T-cell (primary cell): ENCODE measurements at regions of chr17 and their contacts with region 1.

Region 1: GRCh38 chr17:1365445-1366039 is 34.5 kb downstream of the YWHAE start:
- DNase-seq: peak; percentile 12 to 86 (median 50)
- ATAC-seq: peak; percentile 63 to 75 (median 67)
- H3K4me3 ChIP-seq: no peak overlapping the region
- H3K4me3 Mint-ChIP-seq: no peak overlapping the region
- H3K27ac ChIP-seq: peak overlapping the region; percentile 57
- H3K27ac Mint-ChIP-seq: peak overlapping the region; percentile 49 to 73
- H3K4me1 ChIP-seq: peaks cover 24 to 41% of the 10 kb centered on the region in 2 experiments
- H3K4me1 Mint-ChIP-seq: peaks cover 70 to 76% (median 74%) of the 10 kb centered on the region in 3 donors
- H3K27me3 ChIP-seq: no peaks in the 10 kb centered on the region
- H3K27me3 Mint-ChIP-seq: no peaks in the 10 kb centered on the region

Region 2: GRCh38 chr17:1379930-1380313 is 14.4 kb after region 1 on chr17:
- CTCF ChIA-PET with region 1: interaction called in 1 of 2 experiments, 33 read pairs
- POLR2A ChIA-PET with region 1: interaction called, 3 to 6 read pairs
- DNase-seq: peak in 5 of 35 experiments; percentile 13 to 64 (median 16)
- ATAC-seq: peak in 1 of 4 experiments; percentile 54
- H3K4me3 ChIP-seq: no peak overlapping the region
- H3K4me3 Mint-ChIP-seq: peak overlapping the region; percentile 18 to 54 (median 39)
- H3K27ac ChIP-seq: no peak overlapping the region
- H3K27ac Mint-ChIP-seq: peak overlapping the region; percentile 5 to 65
- H3K4me1 ChIP-seq: peaks cover 40 to 90% of the 10 kb centered on the region in 2 experiments
- H3K4me1 Mint-ChIP-seq: peaks cover 78 to 87% (median 80%) of the 10 kb centered on the region in 3 donors
- H3K27me3 ChIP-seq: no peaks in the 10 kb centered on the region
- H3K27me3 Mint-ChIP-seq: no peaks in the 10 kb centered on the region

Region 3: DNA sequence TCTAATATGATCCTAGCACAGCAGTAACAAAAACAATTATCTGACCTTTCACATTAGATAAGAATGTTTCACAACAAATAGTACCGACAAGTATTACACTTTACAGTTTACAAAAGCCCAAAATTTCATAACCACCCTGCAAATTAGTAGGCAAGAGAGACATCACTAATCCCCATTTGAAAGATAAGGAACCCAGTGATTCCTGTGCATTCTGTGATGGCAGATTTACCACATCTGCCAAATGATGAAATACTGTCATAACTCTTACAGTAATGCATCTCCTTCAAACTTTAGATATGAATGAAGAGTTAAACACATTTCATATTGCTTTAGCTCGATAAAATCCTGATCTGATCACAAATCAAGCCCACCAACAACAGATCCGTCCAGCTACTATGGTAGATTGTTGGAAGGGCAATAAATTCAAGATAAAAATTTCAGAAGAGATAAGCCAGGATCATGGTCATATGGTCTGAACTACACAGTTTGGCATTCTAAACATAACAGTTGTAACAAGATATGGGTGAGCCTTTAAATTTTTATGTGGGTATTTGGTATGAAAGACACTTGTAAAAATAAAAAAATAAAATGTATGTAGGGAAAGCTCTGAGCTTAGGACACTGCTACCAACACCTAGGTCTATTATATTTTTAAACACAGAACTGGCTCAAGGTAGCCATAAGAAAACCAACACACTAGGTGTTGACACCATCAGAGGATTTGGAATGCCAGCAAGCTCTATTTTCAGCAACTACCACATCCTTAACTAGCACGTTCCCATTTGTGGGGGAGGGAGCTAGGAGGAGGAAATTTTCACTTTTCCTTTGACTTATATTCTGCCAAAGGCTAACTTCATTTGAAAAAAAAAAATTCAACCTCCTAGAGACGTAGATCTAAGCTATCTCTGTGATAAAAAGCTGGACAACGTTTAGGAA is 25.2 kb after region 1 on chr17:
- CTCF ChIA-PET with region 1: interaction called in 1 of 2 experiments, 15 read pairs
- POLR2A ChIA-PET with region 1: interaction called, 3 to 4 read pairs
- DNase-seq: no peak
- ATAC-seq: no peak
- H3K4me3 ChIP-seq: no peak overlapping the region
- H3K4me3 Mint-ChIP-seq: peak overlapping the region in 2 of 3 donors; percentile 2 to 41
- H3K27ac ChIP-seq: no peak overlapping the region
- H3K27ac Mint-ChIP-seq: peak overlapping the region; percentile 46 to 73
- H3K4me1 ChIP-seq: peaks cover 38 to 74% of the 10 kb centered on the region in 2 experiments
- H3K4me1 Mint-ChIP-seq: peaks cover 84 to 88% (median 88%) of the 10 kb centered on the region in 3 donors
- H3K27me3 ChIP-seq: no peaks in the 10 kb centered on the region
- H3K27me3 Mint-ChIP-seq: no peaks in the 10 kb centered on the region

Region 4: DNA sequence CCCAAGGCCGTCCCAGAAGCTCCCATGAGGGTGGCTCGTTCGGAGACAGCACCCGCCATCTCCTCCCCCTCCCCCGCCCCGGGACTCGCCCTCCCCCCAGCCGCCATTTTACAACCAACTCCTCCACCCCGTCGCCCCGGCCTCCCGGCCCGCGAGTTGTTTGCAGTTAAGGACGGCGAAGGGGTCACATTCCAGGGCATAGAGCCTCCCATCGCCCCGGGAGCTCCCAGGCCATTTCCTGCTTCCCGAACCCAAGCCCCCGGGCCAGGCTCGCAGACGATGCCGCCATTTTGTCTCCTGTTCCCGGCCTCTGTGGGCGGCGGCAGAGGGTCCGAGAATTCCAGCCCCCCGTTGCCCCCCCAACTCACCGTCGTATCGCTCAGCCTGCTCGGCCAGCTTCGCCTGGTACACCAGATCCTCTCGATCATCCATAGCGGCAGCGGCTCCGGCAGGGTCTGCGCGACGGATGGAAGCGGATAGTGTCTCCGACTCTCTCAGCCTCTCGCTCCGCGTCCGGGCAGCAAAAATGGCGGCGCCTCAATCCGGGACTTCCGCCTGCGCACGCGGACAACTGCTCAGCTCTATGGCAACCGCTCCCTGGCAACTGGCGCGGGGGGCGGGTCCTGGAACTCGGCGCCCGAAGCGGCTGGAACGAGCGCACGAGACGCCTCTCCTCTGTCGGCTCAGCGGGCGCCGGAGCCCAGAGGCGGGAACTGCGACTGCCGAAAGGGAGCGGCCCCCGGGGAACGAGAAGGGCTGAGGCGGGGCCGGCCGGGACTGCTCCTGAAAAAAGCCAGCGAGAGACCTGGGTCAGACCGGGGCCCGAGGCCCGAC is 34.4 kb after region 1 on chr17 and contains the start of gene YWHAE:
- CTCF ChIA-PET with region 1: interaction called in 1 of 2 experiments, 13 read pairs
- POLR2A ChIA-PET with region 1: interaction called, 3 to 6 read pairs
- DNase-seq: peak; percentile 91 to 98 (median 94)
- ATAC-seq: peak; percentile 86 to 91 (median 90)
- H3K4me3 ChIP-seq: peak within 1 kb of the TSS; percentile 92 to 95
- H3K4me3 Mint-ChIP-seq: peak within 1 kb of the TSS; percentile 97 to 99 (median 98)
- H3K27ac ChIP-seq: peak within 1 kb of the TSS; percentile 84
- H3K27ac Mint-ChIP-seq: peak within 1 kb of the TSS; percentile 97 to 98
- H3K4me1 ChIP-seq: peaks cover 18 to 37% of the 10 kb centered on the region in 2 experiments
- H3K4me1 Mint-ChIP-seq: peaks cover 34 to 43% (median 40%) of the 10 kb centered on the region in 3 donors
- H3K27me3 ChIP-seq: no peaks in the 10 kb centered on the region
- H3K27me3 Mint-ChIP-seq: no peaks in the 10 kb centered on the region
- total RNA-seq, gene YWHAE: 119 to 129 (median 126) TPM

Region 5: GRCh38 chr17:1455797-1456599 is 90.5 kb after region 1 on chr17 and contains the start of gene CRK:
- CTCF ChIA-PET with region 1: interaction called, 3 to 4 read pairs
- POLR2A ChIA-PET with region 1: interaction called, 3 to 10 read pairs
- DNase-seq: peak; percentile 93 to 100 (median 97)
- ATAC-seq: peak; percentile 92 to 98 (median 96)
- H3K4me3 ChIP-seq: peak within 1 kb of the TSS; percentile 80 to 86
- H3K4me3 Mint-ChIP-seq: peak within 1 kb of the TSS; percentile 86 to 89 (median 87)
- H3K27ac ChIP-seq: peak within 1 kb of the TSS; percentile 78
- H3K27ac Mint-ChIP-seq: peak within 1 kb of the TSS; percentile 79 to 94
- H3K4me1 ChIP-seq: peaks cover 6 to 54% of the 10 kb centered on the region in 2 experiments
- H3K4me1 Mint-ChIP-seq: peaks cover 49 to 51% (median 51%) of the 10 kb centered on the region in 3 donors
- H3K27me3 ChIP-seq: peaks cover 0 to 16% of the 10 kb centered on the region in 2 experiments
- H3K27me3 Mint-ChIP-seq: no peaks in the 10 kb centered on the region
- total RNA-seq, gene CRK: 18.0 to 26.8 (median 22.6) TPM

Region 6: DNA sequence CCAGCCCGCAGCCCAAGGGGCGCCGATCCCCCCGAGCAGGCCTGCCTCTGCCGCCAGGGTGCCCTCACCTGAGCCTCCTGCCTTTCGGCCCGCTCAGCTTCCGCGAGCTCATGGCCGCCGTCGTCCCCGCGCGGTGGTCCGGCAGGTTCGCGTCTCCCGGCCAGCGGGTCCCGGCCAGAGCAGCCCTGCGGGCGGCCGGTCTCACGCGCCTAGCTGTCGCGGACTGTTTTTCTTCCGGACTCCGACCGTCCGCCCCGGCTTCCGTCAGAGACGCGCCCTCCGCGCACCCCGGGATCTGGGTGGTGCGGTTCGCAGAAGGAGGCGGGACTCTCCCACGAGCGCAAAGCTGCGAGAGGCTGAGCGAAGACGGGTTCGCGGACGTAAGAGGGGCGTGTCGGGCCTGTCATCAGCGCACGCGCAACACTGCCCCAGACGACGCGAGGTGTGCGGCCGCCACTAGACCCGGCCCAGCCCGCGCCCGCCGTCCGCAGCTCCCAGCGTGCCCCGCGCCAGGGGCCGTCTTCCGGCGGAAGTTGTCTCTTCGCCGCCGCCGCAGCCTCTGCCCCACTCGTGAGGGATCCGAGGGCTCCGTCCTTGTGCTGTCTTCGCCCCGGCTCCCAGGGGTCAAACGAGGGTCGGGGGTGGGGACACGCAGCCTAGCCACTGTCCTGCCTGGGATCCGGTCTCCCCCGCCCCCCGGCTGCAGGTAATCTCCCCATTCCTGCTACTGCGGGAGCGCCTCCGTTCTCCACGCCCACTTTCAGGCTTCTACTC is 151.0 kb after region 1 on chr17 and contains the start of gene INPP5K:
- CTCF ChIA-PET with region 1: interaction called, 3 to 70 read pairs
- POLR2A ChIA-PET with region 1: interaction called in 1 of 2 experiments, 5 read pairs
- DNase-seq: peak; percentile 92 to 99 (median 98)
- ATAC-seq: peak; percentile 89 to 94 (median 92)
- H3K4me3 ChIP-seq: peak within 1 kb of the TSS; percentile 89 to 90
- H3K4me3 Mint-ChIP-seq: peak within 1 kb of the TSS; percentile 90 to 92 (median 91)
- H3K27ac ChIP-seq: peak within 1 kb of the TSS; percentile 72
- H3K27ac Mint-ChIP-seq: peak within 1 kb of the TSS; percentile 92 to 93
- H3K4me1 ChIP-seq: peaks cover 6 to 35% of the 10 kb centered on the region in 2 experiments
- H3K4me1 Mint-ChIP-seq: peaks cover 23 to 34% (median 28%) of the 10 kb centered on the region in 3 donors
- H3K27me3 ChIP-seq: no peaks in the 10 kb centered on the region
- H3K27me3 Mint-ChIP-seq: no peaks in the 10 kb centered on the region
- total RNA-seq, gene INPP5K: 91.1 to 184 (median 97.0) TPM

Region 7: GRCh38 chr17:1532836-1533602 is 167.5 kb after region 1 on chr17:
- CTCF ChIA-PET with region 1: interaction called in 1 of 2 experiments, 39 read pairs
- POLR2A ChIA-PET with region 1: no interaction called
- DNase-seq: peak in 34 of 35 experiments; percentile 15 to 70 (median 44)
- ATAC-seq: peak; percentile 57 to 92 (median 77)
- H3K4me3 ChIP-seq: no peak overlapping the region
- H3K4me3 Mint-ChIP-seq: no peak overlapping the region
- H3K27ac ChIP-seq: no peak overlapping the region
- H3K27ac Mint-ChIP-seq: no peak overlapping the region
- H3K4me1 ChIP-seq: no peaks in the 10 kb centered on the region
- H3K4me1 Mint-ChIP-seq: peaks cover 0 to 12% (median 2%) of the 10 kb centered on the region in 3 donors
- H3K27me3 ChIP-seq: no peaks in the 10 kb centered on the region
- H3K27me3 Mint-ChIP-seq: no peaks in the 10 kb centered on the region